Stomach (tissue), 19 donors: ENCODE measurements at regions of chr19 and their contacts with region 1.

Region 1: DNA sequence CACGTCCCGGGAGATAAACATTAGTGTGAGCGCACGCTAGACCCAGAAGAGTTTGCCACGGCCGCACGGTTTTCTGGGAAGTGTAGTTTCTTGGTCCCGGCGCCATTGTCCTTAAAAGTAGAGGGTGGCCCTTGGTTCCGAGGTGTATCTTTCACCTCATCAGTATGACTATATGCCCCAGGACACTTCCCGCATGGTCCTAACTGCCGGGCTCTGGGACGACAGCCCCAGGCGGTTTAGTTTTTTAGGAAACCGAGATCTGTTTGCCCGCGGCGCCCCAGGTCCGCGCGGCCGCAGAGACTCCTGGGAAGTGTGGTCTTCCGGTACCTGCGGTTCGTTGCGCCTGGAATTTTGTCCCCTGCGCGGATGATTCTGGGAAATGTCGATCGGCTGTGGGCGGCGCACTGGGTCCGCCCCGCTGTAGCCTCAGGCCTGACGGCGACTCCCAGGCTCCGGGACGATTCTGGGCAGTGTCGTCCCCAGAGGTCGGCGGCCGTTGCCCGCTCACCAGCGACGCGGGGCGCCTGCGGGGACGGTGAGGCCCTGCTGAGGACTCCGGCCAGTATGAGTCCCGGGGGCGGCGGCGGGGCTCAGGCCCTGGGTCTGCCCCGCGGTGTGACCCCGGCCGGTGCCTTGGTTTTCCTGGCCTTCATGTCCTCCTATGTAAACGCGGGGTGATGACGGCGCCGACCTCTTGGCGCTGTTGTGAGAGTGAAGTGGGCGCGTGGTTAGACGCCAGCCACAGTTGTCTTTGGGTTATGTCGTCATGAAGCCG is at the start of gene ZNF181:
- DNase-seq: peak; percentile 89 to 97
- H3K4me3 ChIP-seq: peak within 1 kb of the TSS; percentile 63 to 93 (median 74)
- H3K27ac ChIP-seq: peak within 1 kb of the TSS; percentile 95 to 99 (median 96)
- H3K4me1 ChIP-seq: peaks cover 23 to 34% (median 25%) of the 10 kb centered on the region in 4 donors
- H3K27me3 ChIP-seq: no peaks in the 10 kb centered on the region
- CTCF ChIP-seq: no peak
- EP300 ChIP-seq: no peak
- POLR2A ChIP-seq: no peak
- total RNA-seq, gene ZNF181: 2.3 to 43.2 (median 13.2) TPM

Region 2: GRCh38 chr19:34677386-34678084 is 56.5 kb before region 1 on chr19 and contains the start of gene ZNF302:
- intact Hi-C with region 1: loop called (anchors 10 kb)
- DNase-seq: peak; percentile 96 to 99
- H3K4me3 ChIP-seq: peak within 1 kb of the TSS; percentile 59 to 84 (median 71)
- H3K27ac ChIP-seq: peak within 1 kb of the TSS; percentile 95 to 98 (median 96)
- H3K4me1 ChIP-seq: peaks cover 6 to 29% (median 26%) of the 10 kb centered on the region in 4 donors
- H3K27me3 ChIP-seq: no peaks in the 10 kb centered on the region
- CTCF ChIP-seq: peak in 1 of 7 experiments; percentile 13
- EP300 ChIP-seq: peak; percentile 12
- POLR2A ChIP-seq: peak in 1 of 4 donors; percentile 56
- total RNA-seq, gene ZNF302: 13.8 to 92.4 (median 21.7) TPM